ENCODE measurements at regions of chr1 and their contacts with region 1.

Region 1: GRCh38 chr1:201530741-201531531 is 8.0 kb upstream of the NAV1 start:
- DNase-seq: peak; percentile 75 to 89
- ATAC-seq: peak; percentile 89 to 94
- H3K4me3 ChIP-seq: no peak overlapping the region
- H3K27ac ChIP-seq: peak overlapping the region in 1 of 2 experiments; percentile 52; a peak in 2 of 6 replicates
- H3K4me1 ChIP-seq: peaks cover 21% of the 10 kb centered on the region
- CTCF ChIP-seq: peak; percentile 90
- EP300 ChIP-seq: no peak
- POLR2A ChIP-seq: no peak
- RAD21 ChIP-seq: peak; percentile 93 to 96

Region 2: DNA sequence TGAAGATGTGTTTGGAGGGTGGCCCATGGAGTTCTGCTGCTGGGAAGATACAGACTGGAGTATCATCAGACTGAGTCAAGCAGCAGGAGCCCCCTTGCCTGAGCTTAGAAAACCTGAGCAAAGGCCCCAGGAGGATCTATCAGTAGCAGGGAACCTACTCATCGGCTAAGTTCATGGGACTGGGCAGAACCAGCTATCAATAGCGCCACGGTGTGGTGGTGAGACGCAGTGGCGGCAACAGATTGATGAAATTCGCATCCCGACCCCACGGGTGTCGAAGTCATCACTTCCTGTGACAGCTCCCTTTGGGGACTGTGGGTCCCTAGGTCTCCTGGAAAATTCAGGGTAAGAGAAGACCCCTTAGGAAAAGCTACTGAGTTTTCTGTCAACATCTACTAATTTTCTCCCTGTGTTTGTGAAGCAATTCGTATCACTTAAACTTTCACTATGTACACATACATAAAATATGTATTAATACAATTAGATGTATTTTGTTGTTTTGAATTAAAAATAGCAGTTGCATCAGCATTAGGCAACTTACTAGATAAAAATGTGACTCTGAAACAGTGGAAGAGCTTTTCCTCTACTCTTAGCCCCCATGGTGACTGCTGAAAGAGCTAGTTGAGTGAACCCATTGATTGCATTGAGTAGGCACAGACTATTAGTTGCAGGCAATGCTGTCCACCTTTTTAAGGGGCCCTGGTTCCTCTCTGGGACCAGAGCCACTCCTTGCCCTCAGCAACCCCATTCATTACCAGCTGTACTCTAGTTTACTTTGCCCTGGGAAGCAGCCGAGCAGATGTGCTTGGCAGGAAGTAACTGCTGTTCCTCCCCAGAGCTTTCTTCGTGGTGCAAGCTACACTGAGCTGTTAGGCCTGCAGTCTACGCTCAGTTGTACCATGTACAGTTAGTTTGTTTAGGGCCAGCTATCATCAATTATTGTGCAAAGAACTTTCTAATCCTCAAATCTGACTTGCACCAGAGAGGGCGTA is 411.4 kb before region 1 on chr1:
- CTCF ChIA-PET with region 1: no interaction called
- POLR2A ChIA-PET with region 1: no interaction called
- DNase-seq: peak; percentile 62 to 71
- ATAC-seq: peak in 1 of 2 experiments; percentile 63; a peak in 3 of 6 replicates
- H3K4me3 ChIP-seq: no peak overlapping the region
- H3K27ac ChIP-seq: no peak overlapping the region
- H3K4me1 ChIP-seq: peaks cover 9% of the 10 kb centered on the region; the same call in 2 of the 3 replicates
- CTCF ChIP-seq: peak; percentile 65
- EP300 ChIP-seq: no peak
- POLR2A ChIP-seq: no peak
- RAD21 ChIP-seq: peak; percentile 45 to 57

Region 3: GRCh38 chr1:201517948-201518470 is 12.9 kb before region 1 on chr1:
- CTCF ChIA-PET with region 1: interaction called, 94 read pairs
- POLR2A ChIA-PET with region 1: no interaction called
- DNase-seq: no peak
- ATAC-seq: no peak
- H3K4me3 ChIP-seq: no peak overlapping the region
- H3K27ac ChIP-seq: no peak overlapping the region
- H3K4me1 ChIP-seq: no peaks in the 10 kb centered on the region
- CTCF ChIP-seq: no peak
- EP300 ChIP-seq: no peak
- POLR2A ChIP-seq: no peak
- RAD21 ChIP-seq: no peak

Region 4: DNA sequence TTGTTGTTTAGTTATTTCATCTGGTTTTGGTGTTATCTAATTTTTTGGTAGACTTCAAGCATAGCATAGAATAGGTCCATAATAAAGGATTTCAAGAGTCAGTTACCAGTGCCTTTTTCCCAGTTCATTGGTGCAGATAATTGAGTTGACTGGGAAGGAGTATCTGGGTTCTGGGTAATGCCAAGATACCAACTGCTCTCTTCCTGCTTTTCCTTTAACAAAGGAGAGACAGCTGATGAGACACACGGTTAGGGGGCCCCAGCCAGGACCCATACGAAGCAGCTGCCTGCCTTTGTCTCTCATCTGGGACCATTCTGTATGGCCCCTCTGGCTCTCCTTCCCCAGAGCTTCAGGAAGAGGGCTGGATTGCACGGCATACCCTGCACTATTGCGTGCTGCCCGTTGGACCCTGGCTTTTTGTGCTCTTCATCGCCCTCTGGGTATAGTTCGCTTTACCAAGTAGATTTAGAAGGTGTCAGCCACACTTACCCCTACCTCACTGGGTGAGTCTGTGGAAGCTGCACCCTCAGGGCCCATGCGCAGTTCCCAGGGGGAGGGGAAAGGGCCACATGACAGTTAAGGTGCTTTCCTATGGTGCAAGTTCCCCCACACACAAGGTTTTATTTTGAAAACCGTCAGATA is 15.0 kb after region 1 on chr1:
- CTCF ChIA-PET with region 1: interaction called, 48 read pairs
- POLR2A ChIA-PET with region 1: interaction called, 3 read pairs
- DNase-seq: peak; percentile 47 to 55
- ATAC-seq: peak; percentile 96 to 98
- H3K4me3 ChIP-seq: no peak overlapping the region
- H3K27ac ChIP-seq: peak overlapping the region in 1 of 2 experiments; percentile 70; a peak in 3 of 6 replicates
- H3K4me1 ChIP-seq: peaks cover 6% of the 10 kb centered on the region; the same call in 1 of the 3 replicates
- CTCF ChIP-seq: no peak; the same call in none of the 3 replicates
- EP300 ChIP-seq: no peak
- POLR2A ChIP-seq: no peak
- RAD21 ChIP-seq: no peak

Region 5: GRCh38 chr1:201551877-201552731 is 21.2 kb after region 1 on chr1:
- CTCF ChIA-PET with region 1: interaction called, 48 read pairs
- POLR2A ChIA-PET with region 1: no interaction called
- DNase-seq: peak; percentile 57 to 69
- ATAC-seq: peak; percentile 75 to 78
- H3K4me3 ChIP-seq: no peak overlapping the region
- H3K27ac ChIP-seq: peak overlapping the region; percentile 59 to 86
- H3K4me1 ChIP-seq: peaks cover 11% of the 10 kb centered on the region
- CTCF ChIP-seq: no peak
- EP300 ChIP-seq: no peak
- POLR2A ChIP-seq: no peak
- RAD21 ChIP-seq: no peak

Measured in A549 (cell line).